Activated CD4-positive, alpha-beta T cell treated with anti-CD3 and anti-CD28 coated beads, Interleukin-2, amount 10 ng/mL, durations not matched to agents 24 days and 14 days (primary cell): ENCODE measurements at regions of chr2 and their contacts with region 1.

Region 1: DNA sequence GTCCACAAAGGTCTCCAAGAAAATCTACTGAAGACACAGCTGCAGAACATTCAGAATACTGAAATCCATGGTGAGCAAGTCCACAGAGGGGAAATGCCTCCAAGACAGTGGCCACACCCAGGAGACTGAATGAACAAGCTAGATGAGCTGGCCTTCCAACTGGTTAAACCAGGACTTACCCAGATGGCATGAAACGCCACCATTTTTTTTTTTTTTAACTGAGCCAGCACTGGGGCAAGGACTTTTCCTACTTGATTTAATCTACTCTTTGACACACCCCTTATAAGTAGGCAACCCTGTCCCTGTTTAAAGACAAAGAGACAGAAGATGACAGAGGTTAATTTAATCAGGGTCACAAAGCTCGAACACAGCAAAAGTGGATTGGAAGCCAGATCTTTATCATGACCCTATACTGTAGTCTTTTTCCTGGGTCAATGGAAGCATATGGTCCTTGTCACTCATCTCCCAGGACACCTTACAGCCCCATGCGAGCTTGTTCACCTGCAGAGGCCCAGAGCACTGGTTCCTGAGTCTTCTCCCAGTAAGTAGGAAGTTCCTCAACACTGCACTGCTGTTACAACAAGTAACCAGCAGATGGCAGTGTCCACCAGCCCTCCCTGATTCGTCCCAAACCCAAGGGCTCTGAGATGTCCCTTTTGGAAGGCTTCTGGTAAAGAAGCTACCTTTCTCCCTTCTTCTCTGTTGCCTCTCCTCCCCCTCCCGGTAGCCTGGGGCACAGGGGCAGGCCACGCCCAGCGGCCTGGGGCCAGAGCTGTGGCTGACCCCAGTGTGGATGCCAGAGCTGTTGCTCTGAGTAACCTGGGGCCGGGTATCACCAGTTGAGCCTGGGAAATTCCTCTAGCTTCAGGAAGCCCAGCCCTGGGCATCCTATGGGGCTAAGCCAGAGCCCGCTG is 5.6 kb upstream of the GDF7 start:
- DNase-seq: peak; percentile 90
- H3K4me3 Mint-ChIP-seq: no peak overlapping the region
- H3K27ac Mint-ChIP-seq: no peak overlapping the region
- H3K4me1 Mint-ChIP-seq: peaks cover 2% of the 10 kb centered on the region
- H3K27me3 Mint-ChIP-seq: peaks cover 72% of the 10 kb centered on the region

Region 2: DNA sequence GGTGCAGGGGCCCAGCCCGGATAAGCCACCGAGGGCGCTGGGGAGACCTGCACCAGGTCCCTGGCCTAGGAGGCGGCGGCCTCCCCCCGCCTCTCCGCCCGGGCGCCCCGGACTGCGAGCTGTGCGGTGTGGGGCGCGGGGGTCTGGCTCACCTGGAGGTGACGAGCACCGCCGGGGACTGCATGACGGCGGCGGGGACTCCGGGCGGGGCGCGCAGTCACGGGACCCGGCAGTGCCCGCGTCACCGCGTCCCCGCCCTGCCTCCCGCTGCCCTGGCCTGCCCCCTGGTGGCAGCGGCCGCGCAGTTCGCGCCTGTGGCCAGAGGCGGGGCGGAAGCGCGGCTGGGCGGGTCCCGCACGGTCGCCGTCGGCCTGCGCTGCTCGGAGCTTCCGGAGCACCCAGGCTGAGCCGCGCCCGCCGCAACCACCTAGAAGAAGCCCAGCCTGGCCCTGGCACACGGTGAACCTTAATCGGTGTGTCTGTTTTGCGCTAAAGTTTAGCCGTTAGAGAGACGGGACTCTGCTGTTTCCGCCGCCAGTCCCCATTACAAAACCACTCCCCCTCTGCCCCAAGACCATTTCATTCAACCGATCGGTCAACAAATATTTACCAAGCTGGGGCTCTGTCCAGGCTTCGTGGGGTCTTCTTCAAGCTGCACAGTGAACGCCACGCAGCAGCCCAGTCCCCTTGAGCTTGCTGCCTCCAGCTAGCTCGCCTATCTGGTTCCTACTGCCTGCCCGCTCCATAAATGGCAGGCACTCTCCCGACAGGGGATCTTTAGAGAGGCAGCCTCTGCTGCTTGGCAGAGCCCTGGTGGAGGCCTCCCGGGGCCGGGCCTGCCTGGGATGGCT is 10.2 kb before region 1 on chr2 and contains the start of gene HS1BP3:
- intact Hi-C with region 1: loop called (anchors 1 kb)
- DNase-seq: peak; percentile 98
- H3K4me3 Mint-ChIP-seq: peak within 1 kb of the TSS; percentile 85
- H3K27ac Mint-ChIP-seq: peak within 1 kb of the TSS; percentile 89
- H3K4me1 Mint-ChIP-seq: peaks cover 29% of the 10 kb centered on the region
- H3K27me3 Mint-ChIP-seq: peaks cover 11% of the 10 kb centered on the region
- total RNA-seq, gene HS1BP3: 7.1 and 8.9 TPM in 2 replicates

Region 3: GRCh38 chr2:20755132-20755800 is 93.9 kb after region 1 on chr2:
- intact Hi-C with region 1: loop called (anchors 10 kb)
- DNase-seq: no peak
- H3K4me3 Mint-ChIP-seq: no peak overlapping the region
- H3K27ac Mint-ChIP-seq: no peak overlapping the region
- H3K4me1 Mint-ChIP-seq: peaks cover 8% of the 10 kb centered on the region
- H3K27me3 Mint-ChIP-seq: no peaks in the 10 kb centered on the region

Region 4: GRCh38 chr2:20917719-20918572 is 256.6 kb after region 1 on chr2:
- intact Hi-C with region 1: loop called (anchors 1 kb)
- DNase-seq: no peak
- H3K4me3 Mint-ChIP-seq: no peak overlapping the region
- H3K27ac Mint-ChIP-seq: no peak overlapping the region
- H3K4me1 Mint-ChIP-seq: peaks cover 3% of the 10 kb centered on the region
- H3K27me3 Mint-ChIP-seq: peaks cover 8% of the 10 kb centered on the region

Region 5: DNA sequence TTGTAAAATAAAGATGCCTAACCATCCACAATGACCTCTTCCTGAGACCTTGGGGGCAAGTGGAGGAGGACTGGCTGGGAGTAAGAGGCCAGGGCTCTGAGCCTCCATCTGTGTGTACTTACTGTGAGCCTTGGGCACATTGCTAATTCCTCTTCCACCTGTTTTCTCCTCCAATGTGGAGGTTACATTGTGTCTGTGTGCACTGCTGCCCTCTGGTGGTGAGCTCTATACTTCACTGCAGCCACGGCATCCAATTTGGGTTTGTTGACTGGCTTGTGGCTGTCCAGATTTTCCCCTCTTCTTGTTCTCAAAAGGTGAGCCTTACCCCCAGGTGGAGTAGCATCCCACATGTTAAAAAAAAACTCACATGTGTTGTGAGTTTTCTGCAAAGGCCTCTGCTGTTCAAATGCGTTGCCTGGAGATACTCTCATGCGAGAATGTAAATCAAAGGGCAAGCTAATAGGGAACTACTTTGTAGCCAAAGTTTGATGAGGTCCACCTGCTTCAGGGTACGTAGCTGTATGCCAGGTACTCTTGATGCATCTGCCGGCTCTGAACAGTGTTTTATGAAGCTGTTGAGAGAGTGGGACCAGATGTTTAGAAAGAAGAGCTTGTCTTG is 301.7 kb after region 1 on chr2:
- intact Hi-C with region 1: loop called (anchors 1 kb)
- DNase-seq: peak; percentile 89
- H3K4me3 Mint-ChIP-seq: no peak overlapping the region
- H3K27ac Mint-ChIP-seq: no peak overlapping the region
- H3K4me1 Mint-ChIP-seq: no peaks in the 10 kb centered on the region
- H3K27me3 Mint-ChIP-seq: peaks cover 15% of the 10 kb centered on the region

Region 6: GRCh38 chr2:21118302-21118920 is 457.1 kb after region 1 on chr2:
- intact Hi-C with region 1: loop called (anchors 1 kb)
- DNase-seq: peak; percentile 59
- H3K4me3 Mint-ChIP-seq: no peak overlapping the region
- H3K27ac Mint-ChIP-seq: no peak overlapping the region
- H3K4me1 Mint-ChIP-seq: no peaks in the 10 kb centered on the region
- H3K27me3 Mint-ChIP-seq: peaks cover 2% of the 10 kb centered on the region